Activated naive CD4-positive, alpha-beta T cell treated with anti-CD3 and anti-CD28 coated beads for 36 hours (primary cell): ENCODE measurements at regions of chr3 and their contacts with region 1.

Region 1: GRCh38 chr3:123201566-123202427 is at the start of gene SEC22A:
- DNase-seq: peak; percentile 98
- H3K4me3 Mint-ChIP-seq: peak within 1 kb of the TSS; percentile 95
- H3K27ac Mint-ChIP-seq: peak within 1 kb of the TSS; percentile 95
- H3K4me1 Mint-ChIP-seq: peaks cover 27% of the 10 kb centered on the region
- H3K27me3 Mint-ChIP-seq: no peaks in the 10 kb centered on the region
- total RNA-seq, gene SEC22A: 14.3 to 18.7 TPM

Region 2: DNA sequence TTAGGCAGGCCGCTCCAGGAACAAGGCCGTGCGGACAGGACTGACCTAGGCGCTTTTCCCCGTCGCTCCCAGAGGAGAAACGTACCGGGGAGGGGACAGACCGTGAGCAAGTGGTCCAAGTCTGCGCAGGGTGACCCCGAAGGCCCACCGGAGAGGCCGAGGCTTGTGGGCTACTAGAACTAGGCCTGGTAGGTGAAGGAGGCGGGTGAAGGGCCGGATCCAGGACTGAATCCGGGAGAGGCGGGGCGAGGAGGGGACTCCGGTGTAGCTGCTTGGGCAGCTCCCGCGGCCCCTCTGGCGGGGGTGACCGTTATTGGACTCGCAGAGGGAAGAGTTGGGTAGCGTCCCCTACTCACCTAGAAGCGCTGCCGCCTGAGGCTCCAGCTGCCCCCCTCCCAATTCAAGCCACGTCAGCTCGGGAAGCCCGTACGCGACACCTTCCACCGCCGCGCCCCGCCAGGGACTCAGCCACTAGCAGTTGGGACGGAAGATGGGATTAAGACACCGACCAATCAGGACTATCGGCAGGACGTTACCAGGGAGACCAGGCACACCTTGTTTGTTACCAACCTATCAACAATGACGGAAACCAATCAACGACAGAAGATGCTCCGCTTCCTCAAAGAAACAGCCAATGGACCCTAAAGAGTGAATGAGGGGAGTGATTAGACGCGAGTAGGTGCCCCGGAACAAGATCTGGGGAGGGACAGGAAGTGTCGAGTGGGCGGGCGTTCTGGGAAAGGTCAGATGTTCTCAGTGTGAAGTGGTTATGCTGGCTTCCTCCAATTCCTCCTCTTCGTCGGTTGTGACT is 1452.3 kb before region 1 on chr3 and contains the start of gene GOLGB1:
- CTCF ChIA-PET with region 1: no interaction called
- intact Hi-C with region 1: loop called (anchors 1 kb)
- DNase-seq: peak; percentile 97
- H3K4me3 Mint-ChIP-seq: no peak within 1 kb of the TSS
- H3K27ac Mint-ChIP-seq: no peak within 1 kb of the TSS
- H3K4me1 Mint-ChIP-seq: peaks cover 5% of the 10 kb centered on the region
- H3K27me3 Mint-ChIP-seq: no peaks in the 10 kb centered on the region
- total RNA-seq, gene GOLGB1: 18.2 to 19.7 TPM

Region 3: GRCh38 chr3:122533931-122534334 is 667.9 kb before region 1 on chr3:
- CTCF ChIA-PET with region 1: no interaction called
- intact Hi-C with region 1: loop called (anchors 10 kb)
- DNase-seq: peak; percentile 77
- H3K4me3 Mint-ChIP-seq: no peak overlapping the region
- H3K27ac Mint-ChIP-seq: peak overlapping the region; percentile 28
- H3K4me1 Mint-ChIP-seq: peaks cover 35% of the 10 kb centered on the region
- H3K27me3 Mint-ChIP-seq: no peaks in the 10 kb centered on the region

Region 4: GRCh38 chr3:122793568-122794416 is 408.0 kb before region 1 on chr3 and contains the start of gene HSPBAP1:
- CTCF ChIA-PET with region 1: no interaction called
- intact Hi-C with region 1: loop called (anchors 1 kb)
- DNase-seq: peak; percentile 92
- H3K4me3 Mint-ChIP-seq: peak within 1 kb of the TSS; percentile 86
- H3K27ac Mint-ChIP-seq: peak within 1 kb of the TSS; percentile 80
- H3K4me1 Mint-ChIP-seq: peaks cover 30% of the 10 kb centered on the region
- H3K27me3 Mint-ChIP-seq: no peaks in the 10 kb centered on the region
- total RNA-seq, gene HSPBAP1: 3.0 to 3.2 TPM

Region 5: GRCh38 chr3:123584988-123585937 is 383.5 kb after region 1 on chr3 and contains the start of gene HACD2:
- CTCF ChIA-PET with region 1: no interaction called
- intact Hi-C with region 1: loop called (anchors 1 kb)
- DNase-seq: peak; percentile 96
- H3K4me3 Mint-ChIP-seq: no peak within 1 kb of the TSS
- H3K27ac Mint-ChIP-seq: peak within 1 kb of the TSS; percentile 57
- H3K4me1 Mint-ChIP-seq: peaks cover 22% of the 10 kb centered on the region
- H3K27me3 Mint-ChIP-seq: no peaks in the 10 kb centered on the region
- total RNA-seq, gene HACD2: 25.9 TPM

Region 6: GRCh38 chr3:124730129-124730940 is 1528.5 kb after region 1 on chr3 and contains the start of gene UMPS:
- CTCF ChIA-PET with region 1: no interaction called
- intact Hi-C with region 1: loop called (anchors 2 kb)
- DNase-seq: peak; percentile 96
- H3K4me3 Mint-ChIP-seq: peak within 1 kb of the TSS; percentile 99
- H3K27ac Mint-ChIP-seq: peak within 1 kb of the TSS; percentile 95
- H3K4me1 Mint-ChIP-seq: peaks cover 33% of the 10 kb centered on the region
- H3K27me3 Mint-ChIP-seq: peaks cover 7% of the 10 kb centered on the region
- total RNA-seq, gene UMPS: 29.6 to 34.1 TPM